ENCODE measurements at regions of chr4 and their contacts with region 1.

Region 1: GRCh38 chr4:102826890-102827673 is at the start of gene UBE2D3:
- DNase-seq: peak; percentile 83 to 93 (median 89)
- H3K4me3 ChIP-seq: peak within 1 kb of the TSS; percentile 69 to 98 (median 90)
- H3K27ac ChIP-seq: peak within 1 kb of the TSS; percentile 97 to 100 (median 100)
- H3K27me3 ChIP-seq: no peaks in the 10 kb centered on the region
- CTCF ChIP-seq: peak in 39 of 56 donors; percentile 4 to 60 (median 29)
- total RNA-seq, gene UBE2D3: 177 to 322 (median 252) TPM

Region 2: GRCh38 chr4:102500696-102501446 is 326.2 kb before region 1 on chr4 and contains the start of gene NFKB1:
- intact Hi-C with region 1: loop called (anchors 5 kb)
- DNase-seq: peak in 9 of 10 donors; percentile 37 to 69 (median 53)
- H3K4me3 ChIP-seq: peak within 1 kb of the TSS; percentile 45 to 99 (median 86)
- H3K27ac ChIP-seq: peak within 1 kb of the TSS; percentile 86 to 100 (median 99)
- H3K27me3 ChIP-seq: no peaks in the 10 kb centered on the region
- CTCF ChIP-seq: peak in 13 of 56 donors; percentile 0 to 30 (median 6)
- total RNA-seq, gene NFKB1: 13.0 to 36.6 (median 23.5) TPM

Region 3: GRCh38 chr4:102598086-102598761 is 228.9 kb before region 1 on chr4:
- intact Hi-C with region 1: no loop called
- DNase-seq: no peak
- H3K4me3 ChIP-seq: no peak overlapping the region
- H3K27ac ChIP-seq: peak overlapping the region in 30 of 59 donors; percentile 2 to 72 (median 20)
- H3K27me3 ChIP-seq: no peaks in the 10 kb centered on the region
- CTCF ChIP-seq: no peak

Region 4: DNA sequence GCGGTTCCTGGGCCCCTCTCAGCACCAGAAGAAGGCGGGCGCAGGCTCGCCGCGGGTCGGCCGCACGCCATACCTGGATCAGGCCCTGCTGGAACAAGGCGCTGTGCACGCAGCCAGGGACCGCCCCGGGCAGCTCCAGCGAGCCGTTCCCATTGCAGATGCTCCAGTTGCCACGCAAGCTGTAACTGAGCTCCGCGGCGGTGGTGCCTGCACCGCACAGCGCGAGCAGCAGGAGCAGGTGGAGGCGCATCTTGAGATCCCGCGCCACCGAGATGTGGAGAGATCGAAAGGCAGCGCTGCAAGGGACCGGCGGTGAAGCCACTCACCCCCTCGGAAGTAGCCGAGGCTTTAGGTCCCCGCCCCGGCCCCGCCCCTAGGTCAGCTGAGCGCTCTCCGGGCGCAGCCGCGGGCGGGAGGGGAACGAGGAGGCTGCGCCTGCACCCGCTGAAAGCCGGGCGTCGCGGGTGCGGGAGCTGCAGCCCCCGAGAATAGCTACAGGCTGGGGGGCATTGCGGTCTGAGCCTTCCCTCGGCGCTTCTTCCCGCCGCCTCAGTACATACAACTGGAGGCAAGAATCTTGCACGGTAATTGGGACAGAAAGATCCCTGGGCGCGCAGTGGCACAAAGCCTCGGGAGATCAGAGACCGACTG is 66.3 kb before region 1 on chr4 and contains the start of gene MANBA:
- intact Hi-C with region 1: loop called (anchors 1 to 2 kb)
- DNase-seq: peak; percentile 65 to 89 (median 82)
- H3K4me3 ChIP-seq: peak within 1 kb of the TSS; percentile 63 to 100 (median 95)
- H3K27ac ChIP-seq: peak within 1 kb of the TSS in 58 of 59 donors; percentile 52 to 93 (median 82)
- H3K27me3 ChIP-seq: no peaks in the 10 kb centered on the region
- CTCF ChIP-seq: peak in 27 of 56 donors; percentile 4 to 48 (median 19)
- total RNA-seq, gene MANBA: 18.6 to 39.4 (median 27.7) TPM

Region 5: DNA sequence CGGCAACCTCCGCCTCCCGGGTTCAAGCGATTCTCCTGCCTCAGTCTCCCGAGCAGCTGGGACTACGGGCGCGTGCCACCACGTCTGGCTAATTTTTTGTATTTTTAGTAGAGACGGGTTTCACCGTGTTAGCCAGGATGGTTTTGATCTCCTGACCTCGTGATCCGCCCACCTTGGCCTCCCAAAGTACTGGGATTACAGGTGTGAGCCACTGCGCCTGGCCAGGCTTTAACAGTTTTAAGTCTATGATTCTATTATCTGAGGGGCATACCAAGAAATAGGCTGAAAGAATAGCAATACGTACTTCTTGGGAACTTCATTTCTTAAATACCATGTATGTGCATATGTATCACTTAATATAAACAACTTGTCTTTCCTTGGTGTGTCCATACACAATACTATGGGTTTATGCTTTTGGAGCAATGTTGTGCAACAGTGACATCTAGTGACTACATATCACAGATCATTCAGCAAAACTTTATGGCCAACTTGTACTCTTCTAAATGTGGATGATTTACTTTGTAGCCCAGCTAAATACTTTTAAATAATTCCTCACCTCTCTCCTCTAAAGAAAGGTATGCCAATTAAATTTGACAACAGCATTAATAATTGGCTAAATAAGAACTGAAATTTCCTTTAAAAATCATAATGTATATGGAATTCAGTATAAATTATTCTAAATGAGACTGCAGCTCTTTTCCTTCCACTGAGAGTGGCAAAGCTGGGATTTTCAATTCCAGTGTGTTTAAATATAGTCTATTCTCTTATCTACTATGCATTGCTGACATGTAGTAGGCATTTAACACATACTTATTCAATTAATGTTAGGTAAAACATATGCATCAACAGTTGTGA is 182.0 kb after region 1 on chr4:
- intact Hi-C with region 1: loop called in 1 of 2 experiments (anchors 5 kb)
- DNase-seq: no peak
- H3K4me3 ChIP-seq: no peak overlapping the region
- H3K27ac ChIP-seq: peak overlapping the region in 1 of 59 donors; percentile 31
- H3K27me3 ChIP-seq: no peaks in the 10 kb centered on the region
- CTCF ChIP-seq: peak; percentile 49 to 93 (median 80)